ENCODE measurements at regions of chr3 and their contacts with region 1.

Region 1: GRCh38 chr3:129003578-129004160 is 2.6 kb downstream of the EFCC1 start:
- DNase-seq: peak; percentile 58
- ATAC-seq: peak; percentile 79
- H3K4me3 Mint-ChIP-seq: peak overlapping the region; percentile 10
- H3K27ac Mint-ChIP-seq: no peak overlapping the region
- H3K4me1 Mint-ChIP-seq: peaks cover 50% of the 10 kb centered on the region
- H3K27me3 Mint-ChIP-seq: peaks cover 39% of the 10 kb centered on the region

Region 2: GRCh38 chr3:128763967-128764366 is 239.7 kb before region 1 on chr3:
- CTCF ChIA-PET with region 1: no interaction called
- POLR2A ChIA-PET with region 1: no interaction called
- DNase-seq: peak; percentile 49
- ATAC-seq: peak; percentile 80
- H3K4me3 Mint-ChIP-seq: no peak overlapping the region
- H3K27ac Mint-ChIP-seq: peak overlapping the region; percentile 77
- H3K4me1 Mint-ChIP-seq: peaks cover 55% of the 10 kb centered on the region
- H3K27me3 Mint-ChIP-seq: no peaks in the 10 kb centered on the region

Region 3: DNA sequence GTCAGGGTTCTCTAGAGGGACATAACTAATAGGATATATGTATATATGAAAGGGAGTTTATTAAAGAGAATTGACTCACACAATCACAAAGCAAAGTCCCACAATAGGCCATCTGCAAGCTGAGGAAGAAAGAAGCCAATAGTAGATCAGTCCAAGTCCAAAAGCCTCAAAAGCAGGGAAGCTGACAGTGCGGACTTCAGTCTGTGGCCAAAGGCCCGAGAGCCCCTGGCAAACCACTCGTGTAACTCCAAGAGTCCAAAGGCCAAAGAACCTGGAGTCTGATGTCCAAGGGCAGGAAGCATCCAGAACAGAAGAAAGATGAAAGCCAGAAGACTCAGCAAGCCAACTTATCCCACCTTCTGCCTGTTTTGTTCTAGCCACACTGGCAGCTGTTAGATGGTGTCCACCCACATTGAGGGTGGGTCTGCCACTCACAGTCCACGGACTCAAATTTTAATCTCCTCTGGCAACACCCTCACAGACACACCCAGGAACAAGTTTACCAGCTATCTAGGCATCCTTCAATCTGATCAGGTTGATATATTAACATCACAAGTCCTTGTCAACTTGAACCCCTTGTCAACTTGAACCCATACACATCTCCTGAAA is 178.4 kb before region 1 on chr3:
- CTCF ChIA-PET with region 1: no interaction called
- POLR2A ChIA-PET with region 1: no interaction called
- DNase-seq: no peak
- ATAC-seq: no peak
- H3K4me3 Mint-ChIP-seq: no peak overlapping the region
- H3K27ac Mint-ChIP-seq: no peak overlapping the region
- H3K4me1 Mint-ChIP-seq: no peaks in the 10 kb centered on the region
- H3K27me3 Mint-ChIP-seq: no peaks in the 10 kb centered on the region

Region 4: GRCh38 chr3:128993461-128994173 is 10.1 kb before region 1 on chr3 and contains the start of gene CFAP92:
- CTCF ChIA-PET with region 1: interaction called, 14 read pairs
- POLR2A ChIA-PET with region 1: interaction called, 3 read pairs
- DNase-seq: peak; percentile 95
- ATAC-seq: peak; percentile 98
- H3K4me3 Mint-ChIP-seq: peak within 1 kb of the TSS; percentile 65
- H3K27ac Mint-ChIP-seq: peak within 1 kb of the TSS; percentile 24
- H3K4me1 Mint-ChIP-seq: peaks cover 29% of the 10 kb centered on the region
- H3K27me3 Mint-ChIP-seq: peaks cover 10% of the 10 kb centered on the region
- total RNA-seq, gene CFAP92: 0.18 to 0.26 TPM